ENCODE measurements at regions of chr12 and their contacts with region 1.

Region 1: DNA sequence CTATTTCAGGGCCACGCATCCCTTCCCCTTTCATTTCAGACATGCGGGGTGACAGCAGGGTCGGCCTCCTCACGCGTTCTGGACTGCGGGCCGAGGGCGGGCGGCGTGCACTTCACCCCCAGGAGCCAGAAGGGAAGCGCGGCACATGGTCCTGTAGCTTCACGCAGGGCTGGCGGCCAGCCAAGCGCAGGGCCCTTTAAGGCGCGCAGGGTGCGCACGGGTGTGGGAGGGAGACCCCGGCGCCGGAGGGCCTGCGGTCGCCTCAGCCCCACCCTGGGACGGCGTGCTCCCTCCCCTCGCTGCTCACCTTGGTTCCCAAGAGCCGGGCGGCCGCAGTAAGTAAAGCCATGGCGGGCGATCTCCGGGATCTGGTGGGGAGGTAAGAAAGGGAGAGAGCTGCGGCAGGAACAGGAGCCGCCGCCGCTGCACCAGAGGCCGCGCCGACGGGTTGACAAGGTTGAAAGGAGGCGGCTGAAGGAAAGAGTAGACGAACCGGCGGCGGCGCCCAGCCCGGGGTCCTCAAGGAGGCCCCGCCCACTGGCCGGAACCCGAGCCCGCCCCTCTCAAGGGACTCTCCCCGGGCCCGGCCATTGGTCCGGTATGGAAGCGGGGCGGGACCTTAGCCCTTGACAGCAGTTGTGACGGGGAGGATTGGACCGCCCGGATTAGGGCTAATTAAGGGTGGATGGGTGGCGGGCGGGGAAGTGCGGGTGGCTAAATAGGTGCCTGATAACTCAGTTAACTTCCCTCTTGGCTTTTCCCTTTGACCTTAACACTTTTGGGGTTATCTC is at the start of gene CS:
- DNase-seq: peak; percentile 99
- ATAC-seq: peak; percentile 82 to 94
- H3K4me3 ChIP-seq: peak within 1 kb of the TSS; percentile 74 to 95 (median 86)
- H3K27ac ChIP-seq: peak within 1 kb of the TSS; percentile 91 to 97 (median 94)
- H3K4me1 ChIP-seq: peaks cover 66 to 71% of the 10 kb centered on the region in 2 donors
- H3K27me3 ChIP-seq: no peaks in the 10 kb centered on the region
- CTCF ChIP-seq: peak in 1 of 5 experiments; percentile 29
- POLR2A ChIP-seq: peak; percentile 86 to 92
- total RNA-seq, gene CS: 211 to 359 (median 271) TPM

Region 2: DNA sequence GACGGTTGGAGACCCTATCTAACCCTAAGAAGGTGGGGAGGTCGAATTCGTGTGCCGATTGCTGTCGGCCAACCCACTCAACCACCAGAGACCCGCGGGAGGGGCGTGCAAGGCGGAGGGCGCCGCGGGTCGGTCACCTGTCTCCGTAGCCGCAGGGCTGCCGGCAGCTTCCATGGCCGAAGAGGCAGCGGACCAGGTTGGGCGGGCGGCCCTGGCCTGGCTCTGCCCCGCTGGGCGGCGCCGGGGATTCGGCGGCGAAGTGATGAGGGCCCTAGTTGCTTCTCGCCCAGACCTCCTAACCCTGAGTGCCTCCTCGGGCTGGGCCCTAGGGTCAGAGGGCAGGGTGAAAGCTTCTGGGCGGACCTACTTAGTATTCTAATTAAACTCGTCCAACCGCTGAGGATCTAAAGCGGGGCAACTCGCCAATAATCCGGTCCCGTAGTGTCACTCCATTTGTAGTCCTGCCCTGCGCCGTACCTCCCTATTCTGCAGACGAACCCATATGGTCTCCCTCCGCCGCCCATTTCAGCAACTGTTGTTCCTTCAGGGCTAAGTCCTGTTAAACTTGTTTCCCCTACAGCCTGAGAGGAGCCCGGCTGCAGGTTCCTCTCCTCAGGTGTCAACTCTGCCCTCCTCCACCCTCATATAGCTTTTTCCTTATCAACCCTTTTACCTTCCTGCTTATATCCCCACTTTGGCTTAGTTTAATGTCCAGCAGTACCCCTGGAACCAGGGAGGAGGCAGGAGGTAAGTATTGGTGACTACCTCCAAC is 372.3 kb before region 1 on chr12 and contains the start of gene PYM1:
- in situ Hi-C with region 1: no loop called
- intact Hi-C with region 1: no loop called
- DNase-seq: peak; percentile 68 to 82
- ATAC-seq: peak; percentile 54 to 56
- H3K4me3 ChIP-seq: peak within 1 kb of the TSS; percentile 92 to 100 (median 94)
- H3K27ac ChIP-seq: peak within 1 kb of the TSS; percentile 94 to 98 (median 98)
- H3K4me1 ChIP-seq: peaks cover 29 to 37% of the 10 kb centered on the region in 2 donors
- H3K27me3 ChIP-seq: peaks cover 0 to 8% (median 0%) of the 10 kb centered on the region in 3 donors
- CTCF ChIP-seq: no peak
- POLR2A ChIP-seq: peak; percentile 30 to 43
- total RNA-seq, gene PYM1: 12.8 to 24.5 (median 15.9) TPM

Region 3: GRCh38 chr12:56104109-56104814 is 195.8 kb before region 1 on chr12 and contains the start of gene PA2G4:
- in situ Hi-C with region 1: no loop called
- intact Hi-C with region 1: no loop called
- DNase-seq: peak; percentile 98
- ATAC-seq: peak; percentile 95 to 96
- H3K4me3 ChIP-seq: peak within 1 kb of the TSS; percentile 77 to 98 (median 84)
- H3K27ac ChIP-seq: peak within 1 kb of the TSS; percentile 85 to 93 (median 92)
- H3K4me1 ChIP-seq: peaks cover 20 to 26% of the 10 kb centered on the region in 2 donors
- H3K27me3 ChIP-seq: no peaks in the 10 kb centered on the region
- CTCF ChIP-seq: no peak
- POLR2A ChIP-seq: peak; percentile 85 to 96
- total RNA-seq, gene PA2G4: 109 to 204 (median 127) TPM

Region 4: DNA sequence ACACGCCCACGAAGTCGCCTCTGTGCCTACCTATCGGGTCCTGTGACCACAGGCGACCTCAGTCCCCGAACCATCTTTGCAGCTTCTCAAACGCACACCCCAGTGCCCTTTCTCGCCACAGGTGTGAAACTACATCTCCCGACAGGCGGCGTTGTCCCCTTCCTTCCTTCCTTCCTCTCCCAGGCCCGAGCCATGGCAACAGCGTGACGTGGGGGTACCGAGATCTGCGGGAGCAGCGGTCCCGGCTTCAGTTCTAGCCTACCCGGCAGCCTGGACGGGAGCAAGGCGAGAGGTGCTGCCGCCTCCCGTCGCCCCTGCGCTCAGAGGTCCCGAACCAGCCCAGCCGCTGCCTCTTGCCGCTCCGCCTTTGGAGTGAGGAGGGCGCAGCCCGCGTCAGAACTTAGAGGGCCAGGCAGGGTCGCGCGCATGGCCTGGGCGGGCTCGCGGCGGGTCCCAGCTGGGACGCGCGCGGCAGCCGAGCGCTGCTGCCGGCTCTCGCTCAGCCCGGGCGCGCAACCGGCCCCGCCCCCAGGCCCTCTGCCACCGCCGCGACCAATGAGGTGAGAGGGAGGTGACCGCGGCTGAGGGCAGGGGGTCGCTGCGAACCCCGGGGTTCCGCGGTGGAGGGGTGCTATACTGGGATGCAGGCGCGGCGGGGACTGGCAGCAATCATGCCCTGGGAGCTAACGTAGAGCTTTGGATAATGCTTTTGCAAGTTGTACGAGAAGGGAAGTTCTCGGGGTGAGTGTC is 33.2 kb before region 1 on chr12 and contains the start of gene COQ10A:
- in situ Hi-C with region 1: no loop called
- intact Hi-C with region 1: loop called (anchors 1 kb)
- DNase-seq: peak; percentile 89 to 94
- ATAC-seq: peak; percentile 64 to 75
- H3K4me3 ChIP-seq: peak within 1 kb of the TSS; percentile 70 to 88 (median 80)
- H3K27ac ChIP-seq: peak within 1 kb of the TSS; percentile 95 to 99 (median 98)
- H3K4me1 ChIP-seq: peaks cover 49 to 52% of the 10 kb centered on the region in 2 donors
- H3K27me3 ChIP-seq: no peaks in the 10 kb centered on the region
- CTCF ChIP-seq: peak; percentile 48 to 81 (median 78)
- POLR2A ChIP-seq: peak; percentile 97 to 98
- total RNA-seq, gene COQ10A: 17.7 to 90.1 (median 54.5) TPM

Region 5: DNA sequence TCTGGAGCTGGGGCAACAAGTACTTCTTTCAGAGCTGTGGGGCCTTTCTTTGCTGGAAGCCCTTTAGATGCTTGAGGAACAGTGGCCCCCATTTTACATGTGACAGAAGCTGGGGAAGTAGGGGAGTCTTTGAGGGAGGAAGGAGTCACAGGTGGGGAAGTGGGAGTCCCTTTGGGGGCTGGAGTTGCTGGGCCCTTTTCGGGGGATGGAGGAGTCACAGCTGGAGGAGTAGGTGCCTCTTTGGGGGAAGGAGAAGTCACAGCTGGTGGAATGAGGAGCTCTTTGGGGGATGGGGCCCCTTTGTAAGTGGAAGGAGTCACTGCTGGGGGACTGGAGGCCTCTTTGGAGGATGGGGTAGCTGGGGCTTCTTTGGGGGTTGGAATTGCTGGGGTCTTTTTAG is 416.4 kb after region 1 on chr12:
- in situ Hi-C with region 1: no loop called
- intact Hi-C with region 1: no loop called
- DNase-seq: no peak
- ATAC-seq: no peak
- H3K4me3 ChIP-seq: no peak overlapping the region
- H3K27ac ChIP-seq: peak overlapping the region; percentile 80 to 97 (median 95)
- H3K4me1 ChIP-seq: peaks cover 81 to 86% of the 10 kb centered on the region in 2 donors
- H3K27me3 ChIP-seq: no peaks in the 10 kb centered on the region
- CTCF ChIP-seq: no peak
- POLR2A ChIP-seq: no peak

Region 6: GRCh38 chr12:56728139-56728861 is 428.3 kb after region 1 on chr12:
- in situ Hi-C with region 1: no loop called
- intact Hi-C with region 1: no loop called
- DNase-seq: no peak
- ATAC-seq: no peak
- H3K4me3 ChIP-seq: no peak overlapping the region
- H3K27ac ChIP-seq: no peak overlapping the region
- H3K4me1 ChIP-seq: peaks cover 2 to 11% of the 10 kb centered on the region in 2 donors
- H3K27me3 ChIP-seq: no peaks in the 10 kb centered on the region
- CTCF ChIP-seq: no peak
- POLR2A ChIP-seq: no peak

Measured in gastrocnemius medialis (tissue), 4 donors.